Panc1 (cell line): ENCODE measurements at regions of chr5 and their contacts with region 1.

Region 1: DNA sequence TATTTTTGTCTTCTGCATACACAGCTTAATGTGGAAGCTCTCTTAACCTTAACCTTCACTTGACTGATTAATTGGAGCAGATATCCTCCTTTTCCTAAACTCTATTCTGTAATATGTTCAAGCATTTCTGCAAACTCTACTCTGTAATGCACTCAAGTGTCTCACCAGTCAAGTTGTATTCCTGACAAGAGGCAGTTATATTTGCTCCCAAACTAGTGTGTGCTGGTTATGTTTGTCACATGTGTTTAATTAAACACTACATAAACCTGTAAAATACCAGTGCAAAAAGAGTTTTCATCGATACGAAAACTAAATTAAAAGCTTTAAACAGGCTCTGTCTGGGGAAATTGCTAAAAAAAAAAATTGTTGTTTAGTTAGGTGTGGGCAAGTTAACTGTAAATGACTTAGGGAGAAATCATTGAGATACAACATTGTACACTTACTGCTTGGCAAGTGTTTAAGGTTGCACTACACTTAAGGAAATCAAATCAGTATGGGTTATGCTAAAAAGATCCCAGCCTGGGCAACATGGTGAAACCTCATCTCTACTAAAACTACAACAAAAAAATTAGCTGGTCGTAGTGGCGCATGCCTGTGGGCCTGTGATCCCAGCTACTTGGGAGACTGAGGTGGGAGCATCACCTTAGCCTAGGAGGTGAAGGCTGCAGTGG is 6.7 kb downstream of the FAF2 start:
- DNase-seq: no peak
- ATAC-seq: no peak
- H3K4me3 ChIP-seq: no peak overlapping the region
- H3K27ac ChIP-seq: no peak overlapping the region
- H3K4me1 ChIP-seq: peaks cover 8% of the 10 kb centered on the region
- H3K27me3 ChIP-seq: no peaks in the 10 kb centered on the region
- CTCF ChIP-seq: no peak

Region 2: GRCh38 chr5:176201811-176202210 is 253.0 kb before region 1 on chr5:
- CTCF ChIA-PET with region 1: no interaction called
- POLR2A ChIA-PET with region 1: no interaction called
- in situ Hi-C with region 1: no loop called
- intact Hi-C with region 1: no loop called
- DNase-seq: no peak
- ATAC-seq: no peak
- H3K4me3 ChIP-seq: no peak overlapping the region
- H3K27ac ChIP-seq: no peak overlapping the region
- H3K4me1 ChIP-seq: no peaks in the 10 kb centered on the region
- H3K27me3 ChIP-seq: no peaks in the 10 kb centered on the region
- CTCF ChIP-seq: no peak

Region 3: GRCh38 chr5:176724472-176724871 is 269.6 kb after region 1 on chr5:
- CTCF ChIA-PET with region 1: no interaction called
- POLR2A ChIA-PET with region 1: interaction called, 19 read pairs
- in situ Hi-C with region 1: no loop called
- intact Hi-C with region 1: no loop called
- DNase-seq: no peak
- ATAC-seq: no peak
- H3K4me3 ChIP-seq: no peak overlapping the region
- H3K27ac ChIP-seq: no peak overlapping the region
- H3K4me1 ChIP-seq: no peaks in the 10 kb centered on the region
- H3K27me3 ChIP-seq: no peaks in the 10 kb centered on the region
- CTCF ChIP-seq: no peak